AG04449 (cell line): ENCODE measurements at regions of chr7 and their contacts with region 1.

Region 1: GRCh38 chr7:11212080-11212711 is 238.5 kb downstream of the PHF14 start:
- DNase-seq: peak; percentile 10
- H3K4me3 ChIP-seq: no peak overlapping the region
- CTCF ChIP-seq: peak; percentile 71

Region 2: GRCh38 chr7:10939911-10940703 is 272.1 kb before region 1 on chr7:
- CTCF ChIA-PET with region 1: interaction called, 20 read pairs
- POLR2A ChIA-PET with region 1: no interaction called
- DNase-seq: peak; percentile 79
- H3K4me3 ChIP-seq: peak overlapping the region; percentile 87
- CTCF ChIP-seq: no peak

Region 3: GRCh38 chr7:11193131-11193811 is 18.9 kb before region 1 on chr7:
- CTCF ChIA-PET with region 1: interaction called, 13 read pairs
- POLR2A ChIA-PET with region 1: no interaction called
- DNase-seq: no peak
- H3K4me3 ChIP-seq: peak overlapping the region; percentile 51
- CTCF ChIP-seq: no peak

Region 4: GRCh38 chr7:11228515-11228914 is 16.3 kb after region 1 on chr7:
- CTCF ChIA-PET with region 1: interaction called, 45 read pairs
- POLR2A ChIA-PET with region 1: no interaction called
- DNase-seq: no peak
- H3K4me3 ChIP-seq: no peak overlapping the region
- CTCF ChIP-seq: no peak

Region 5: DNA sequence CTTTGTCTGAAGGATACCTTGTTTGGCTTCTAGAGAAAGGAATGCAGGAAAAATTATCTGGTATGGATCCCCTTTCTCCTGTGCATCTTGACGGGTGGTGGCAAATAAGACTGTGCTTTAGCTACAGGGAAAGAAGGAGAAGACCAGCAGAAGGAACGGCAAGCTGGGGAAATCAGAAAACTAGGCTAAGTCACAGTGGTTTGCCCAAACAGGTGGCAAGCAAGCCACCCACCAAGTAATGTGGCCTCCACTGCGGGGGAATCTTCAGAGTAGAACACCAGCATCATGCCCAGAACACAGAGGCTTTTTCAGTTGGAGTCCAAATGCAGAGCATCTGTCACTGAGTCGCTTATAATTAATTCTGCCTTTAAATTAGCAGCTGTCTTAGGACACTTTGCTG is 44.3 kb after region 1 on chr7:
- CTCF ChIA-PET with region 1: no interaction called
- POLR2A ChIA-PET with region 1: no interaction called
- DNase-seq: no peak
- H3K4me3 ChIP-seq: no peak overlapping the region
- CTCF ChIP-seq: no peak

Region 6: DNA sequence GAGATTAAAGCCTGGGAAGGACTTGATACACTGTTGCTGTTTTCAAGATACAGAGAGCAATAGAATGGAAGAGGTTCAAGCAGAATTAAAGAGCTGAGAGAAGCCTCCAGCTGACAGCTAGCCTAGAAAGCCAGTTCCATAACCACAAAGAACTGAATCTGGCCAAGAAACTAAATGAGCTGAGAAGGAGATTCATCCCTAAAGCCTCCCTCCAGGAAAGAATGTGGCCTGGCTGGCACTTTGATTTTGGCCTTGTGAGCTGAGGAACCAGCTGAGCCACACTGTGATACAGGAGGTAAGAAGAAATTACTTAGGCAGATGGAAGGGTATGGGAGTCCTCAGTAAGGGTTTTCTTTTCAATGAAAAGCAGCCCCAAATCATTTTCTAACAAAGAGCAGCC is 85.6 kb after region 1 on chr7:
- CTCF ChIA-PET with region 1: no interaction called
- POLR2A ChIA-PET with region 1: no interaction called
- DNase-seq: no peak
- H3K4me3 ChIP-seq: no peak overlapping the region
- CTCF ChIP-seq: no peak